Activated B cell treated with CpG ODN at 0.5 μM for 24 hours (primary cell): ENCODE measurements at regions of chr5 and their contacts with region 1.

Region 1: GRCh38 chr5:163505368-163506094 is at the start of gene MAT2B:
- DNase-seq: peak; percentile 92
- ATAC-seq: peak; percentile 90
- H3K4me3 Mint-ChIP-seq: peak within 1 kb of the TSS; percentile 95
- H3K27ac Mint-ChIP-seq: peak within 1 kb of the TSS; percentile 97
- H3K4me1 Mint-ChIP-seq: peaks cover 69% of the 10 kb centered on the region
- H3K27me3 Mint-ChIP-seq: no peaks in the 10 kb centered on the region
- CTCF ChIP-seq: no peak
- total RNA-seq, gene MAT2B: 74.7 and 76.4 TPM in 2 replicates

Region 2: GRCh38 chr5:162529886-162530285 is 975.6 kb before region 1 on chr5:
- CTCF ChIA-PET with region 1: no interaction called
- POLR2A ChIA-PET with region 1: no interaction called
- intact Hi-C with region 1: no loop called
- DNase-seq: no peak
- ATAC-seq: no peak
- H3K4me3 Mint-ChIP-seq: no peak overlapping the region
- H3K27ac Mint-ChIP-seq: no peak overlapping the region
- H3K4me1 Mint-ChIP-seq: no peaks in the 10 kb centered on the region
- H3K27me3 Mint-ChIP-seq: no peaks in the 10 kb centered on the region
- CTCF ChIP-seq: no peak

Region 3: DNA sequence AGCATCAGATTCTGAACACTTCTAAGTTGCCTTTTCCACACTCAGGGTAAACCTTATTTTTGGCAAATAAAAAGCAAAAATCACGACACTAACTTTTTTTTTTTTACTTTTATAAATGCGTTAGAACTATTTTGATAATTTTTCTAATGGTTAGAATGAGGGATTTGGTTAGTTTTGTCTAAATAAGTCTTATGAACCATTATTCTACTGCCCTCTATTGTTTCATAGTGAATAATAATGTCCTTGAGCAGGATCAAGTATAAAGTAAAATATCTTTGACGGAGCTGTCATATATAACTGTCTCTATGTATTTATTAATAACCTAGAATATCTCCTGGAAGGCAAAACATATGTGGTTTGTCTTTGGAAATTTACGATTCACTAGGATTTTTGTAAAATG is 806.2 kb before region 1 on chr5:
- CTCF ChIA-PET with region 1: no interaction called
- POLR2A ChIA-PET with region 1: no interaction called
- intact Hi-C with region 1: no loop called
- DNase-seq: no peak
- ATAC-seq: no peak
- H3K4me3 Mint-ChIP-seq: no peak overlapping the region
- H3K27ac Mint-ChIP-seq: no peak overlapping the region
- H3K4me1 Mint-ChIP-seq: no peaks in the 10 kb centered on the region
- H3K27me3 Mint-ChIP-seq: no peaks in the 10 kb centered on the region
- CTCF ChIP-seq: no peak

Region 4: GRCh38 chr5:163437309-163438182 is 68.0 kb before region 1 on chr5 and contains the start of gene CCNG1:
- CTCF ChIA-PET with region 1: no interaction called
- POLR2A ChIA-PET with region 1: interaction called, 19 read pairs
- intact Hi-C with region 1: loop called (anchors 1 kb)
- DNase-seq: peak; percentile 76
- ATAC-seq: peak; percentile 97
- H3K4me3 Mint-ChIP-seq: peak within 1 kb of the TSS; percentile 89
- H3K27ac Mint-ChIP-seq: peak within 1 kb of the TSS; percentile 89
- H3K4me1 Mint-ChIP-seq: peaks cover 34% of the 10 kb centered on the region
- H3K27me3 Mint-ChIP-seq: no peaks in the 10 kb centered on the region
- CTCF ChIP-seq: no peak
- total RNA-seq, gene CCNG1: 71.2 and 73.0 TPM in 2 replicates

Region 5: GRCh38 chr5:163473635-163474243 is 31.8 kb before region 1 on chr5:
- CTCF ChIA-PET with region 1: interaction called, 7 read pairs
- POLR2A ChIA-PET with region 1: interaction called, 4 read pairs
- intact Hi-C with region 1: loop called (anchors 1 kb)
- DNase-seq: no peak
- ATAC-seq: peak; percentile 65
- H3K4me3 Mint-ChIP-seq: no peak overlapping the region
- H3K27ac Mint-ChIP-seq: no peak overlapping the region
- H3K4me1 Mint-ChIP-seq: no peaks in the 10 kb centered on the region
- H3K27me3 Mint-ChIP-seq: no peaks in the 10 kb centered on the region
- CTCF ChIP-seq: no peak

Region 6: DNA sequence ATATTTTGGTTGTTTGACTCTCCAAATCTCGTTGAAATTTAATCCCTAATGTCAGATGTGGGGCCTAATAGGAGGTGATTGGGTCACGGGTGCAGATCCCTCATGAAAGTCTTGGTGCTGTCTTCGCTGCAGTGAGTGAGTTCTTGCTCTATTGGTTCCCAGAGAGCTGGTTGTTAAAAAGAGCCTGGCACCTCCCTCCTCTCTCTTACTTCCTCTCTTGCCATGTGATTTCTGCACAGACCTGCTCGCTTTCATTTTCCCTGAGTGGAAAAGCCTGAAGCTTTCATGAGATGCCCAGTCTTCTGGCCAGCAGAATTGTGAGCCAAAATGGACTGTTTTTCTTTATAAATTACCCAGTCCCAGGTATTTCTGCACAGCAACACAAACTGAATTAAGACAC is 221.5 kb after region 1 on chr5:
- CTCF ChIA-PET with region 1: no interaction called
- POLR2A ChIA-PET with region 1: no interaction called
- intact Hi-C with region 1: loop called (anchors 5 kb)
- DNase-seq: no peak
- ATAC-seq: peak; percentile 96
- H3K4me3 Mint-ChIP-seq: peak overlapping the region; percentile 65
- H3K27ac Mint-ChIP-seq: peak overlapping the region; percentile 72
- H3K4me1 Mint-ChIP-seq: peaks cover 36% of the 10 kb centered on the region
- H3K27me3 Mint-ChIP-seq: no peaks in the 10 kb centered on the region
- CTCF ChIP-seq: no peak